Activated CD4-positive, alpha-beta memory T cell treated with anti-CD3 and anti-CD28 coated beads for 36 hours (primary cell): ENCODE measurements at regions of chr6 and their contacts with region 1.

Region 1: GRCh38 chr6:73739096-73739495 is 43.1 kb downstream of the CD109 start:
- DNase-seq: no peak
- H3K4me3 Mint-ChIP-seq: no peak overlapping the region
- H3K27ac Mint-ChIP-seq: no peak overlapping the region
- H3K4me1 Mint-ChIP-seq: no peaks in the 10 kb centered on the region
- H3K27me3 Mint-ChIP-seq: no peaks in the 10 kb centered on the region

Region 2: DNA sequence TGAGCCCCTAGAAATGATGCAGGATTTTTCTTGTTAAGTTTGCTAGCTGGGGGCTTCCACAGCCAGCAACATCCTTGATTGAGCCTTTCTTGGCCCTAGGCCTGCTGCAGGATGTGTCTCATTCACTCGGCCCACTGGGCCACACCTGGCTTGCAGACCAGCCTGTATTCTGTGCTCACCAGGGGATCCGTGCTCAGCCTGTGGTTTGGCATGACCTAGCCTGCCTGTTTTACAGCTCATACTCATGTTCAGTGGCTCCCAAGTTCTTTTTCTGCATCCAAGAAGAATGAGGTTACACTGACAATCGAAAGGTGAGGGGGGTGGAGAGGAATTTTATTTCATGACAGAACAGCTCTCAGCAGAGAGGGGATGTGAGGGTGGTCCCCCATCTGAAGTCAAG is 1589.4 kb before region 1 on chr6:
- CTCF ChIA-PET with region 1: no interaction called
- POLR2A ChIA-PET with region 1: no interaction called
- intact Hi-C with region 1: no loop called
- DNase-seq: no peak
- H3K4me3 Mint-ChIP-seq: no peak overlapping the region
- H3K27ac Mint-ChIP-seq: no peak overlapping the region
- H3K4me1 Mint-ChIP-seq: no peaks in the 10 kb centered on the region
- H3K27me3 Mint-ChIP-seq: no peaks in the 10 kb centered on the region

Region 3: DNA sequence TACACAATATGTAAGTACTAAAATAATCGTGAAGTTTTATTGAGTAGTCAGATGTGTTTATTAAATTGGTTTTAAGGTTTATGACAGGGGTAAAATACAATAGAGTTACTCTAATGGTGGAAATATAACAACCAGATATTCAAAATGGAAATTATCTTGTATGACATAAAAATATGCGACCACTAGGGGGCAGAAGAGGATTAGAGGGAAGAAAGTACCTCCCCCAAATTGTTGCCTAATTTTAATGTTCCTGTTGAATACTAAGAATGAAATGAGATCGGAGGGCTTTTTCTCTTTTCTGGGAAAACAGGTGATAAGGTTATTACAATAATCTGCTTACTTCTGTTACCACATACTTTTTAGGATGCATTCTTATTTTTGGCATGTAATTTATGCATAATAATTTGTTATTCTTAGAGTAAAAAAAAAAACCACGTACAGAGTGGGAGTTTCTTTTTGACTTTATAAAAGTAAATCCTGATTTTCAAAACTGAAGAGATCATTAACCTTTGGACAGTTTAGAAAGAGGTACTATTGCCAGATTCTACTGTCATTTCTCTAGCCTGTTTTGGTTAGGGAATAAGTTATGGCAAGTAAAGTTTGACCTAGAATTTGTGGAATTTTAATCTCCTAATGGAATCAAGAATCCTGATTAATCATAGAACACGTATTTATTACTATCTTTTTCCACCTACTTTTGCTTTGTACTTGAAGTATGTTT is 116.1 kb after region 1 on chr6:
- CTCF ChIA-PET with region 1: interaction called, 7 read pairs
- POLR2A ChIA-PET with region 1: no interaction called
- intact Hi-C with region 1: loop called (anchors 1 kb)
- DNase-seq: no peak
- H3K4me3 Mint-ChIP-seq: no peak overlapping the region
- H3K27ac Mint-ChIP-seq: no peak overlapping the region
- H3K4me1 Mint-ChIP-seq: no peaks in the 10 kb centered on the region
- H3K27me3 Mint-ChIP-seq: no peaks in the 10 kb centered on the region

Region 4: GRCh38 chr6:74091136-74091793 is 352.2 kb after region 1 on chr6:
- CTCF ChIA-PET with region 1: interaction called, 6 read pairs
- POLR2A ChIA-PET with region 1: no interaction called
- intact Hi-C with region 1: loop called (anchors 5 kb)
- DNase-seq: no peak
- H3K4me3 Mint-ChIP-seq: no peak overlapping the region
- H3K27ac Mint-ChIP-seq: no peak overlapping the region
- H3K4me1 Mint-ChIP-seq: no peaks in the 10 kb centered on the region
- H3K27me3 Mint-ChIP-seq: peaks cover 3% of the 10 kb centered on the region

Region 5: DNA sequence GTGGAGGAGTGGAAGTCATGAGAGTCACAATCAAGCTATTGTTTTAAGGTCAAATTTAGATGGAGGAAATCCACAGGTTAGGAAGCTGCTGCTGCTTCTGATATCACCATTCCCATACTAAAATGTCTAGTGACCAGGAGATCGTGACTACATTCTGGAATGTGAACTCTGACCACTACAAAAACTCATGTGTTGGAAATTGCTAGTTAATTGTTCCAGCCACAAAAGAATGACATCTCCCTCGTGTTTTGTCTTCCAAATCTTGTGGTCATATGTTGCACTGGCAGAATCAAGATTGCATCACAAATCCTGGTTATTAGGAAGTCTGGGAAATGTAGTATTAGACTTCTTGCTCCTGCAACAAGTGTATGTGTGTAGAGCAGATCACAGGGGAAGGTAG is 398.8 kb after region 1 on chr6:
- CTCF ChIA-PET with region 1: no interaction called
- POLR2A ChIA-PET with region 1: no interaction called
- intact Hi-C with region 1: no loop called
- DNase-seq: no peak
- H3K4me3 Mint-ChIP-seq: no peak overlapping the region
- H3K27ac Mint-ChIP-seq: no peak overlapping the region
- H3K4me1 Mint-ChIP-seq: no peaks in the 10 kb centered on the region
- H3K27me3 Mint-ChIP-seq: no peaks in the 10 kb centered on the region